Sigmoid colon (tissue), 7 donors: ENCODE measurements at regions of chr1 and their contacts with region 1.

Region 1: GRCh38 chr1:243325305-243325890 is 69.6 kb downstream of the SDCCAG8 start:
- DNase-seq: no peak
- H3K4me3 ChIP-seq: no peak overlapping the region
- H3K27ac ChIP-seq: no peak overlapping the region
- H3K4me1 ChIP-seq: no peaks in the 10 kb centered on the region
- H3K27me3 ChIP-seq: no peaks in the 10 kb centered on the region
- CTCF ChIP-seq: peak; percentile 31 to 81 (median 64)
- EP300 ChIP-seq: no peak
- POLR2A ChIP-seq: no peak

Region 2: DNA sequence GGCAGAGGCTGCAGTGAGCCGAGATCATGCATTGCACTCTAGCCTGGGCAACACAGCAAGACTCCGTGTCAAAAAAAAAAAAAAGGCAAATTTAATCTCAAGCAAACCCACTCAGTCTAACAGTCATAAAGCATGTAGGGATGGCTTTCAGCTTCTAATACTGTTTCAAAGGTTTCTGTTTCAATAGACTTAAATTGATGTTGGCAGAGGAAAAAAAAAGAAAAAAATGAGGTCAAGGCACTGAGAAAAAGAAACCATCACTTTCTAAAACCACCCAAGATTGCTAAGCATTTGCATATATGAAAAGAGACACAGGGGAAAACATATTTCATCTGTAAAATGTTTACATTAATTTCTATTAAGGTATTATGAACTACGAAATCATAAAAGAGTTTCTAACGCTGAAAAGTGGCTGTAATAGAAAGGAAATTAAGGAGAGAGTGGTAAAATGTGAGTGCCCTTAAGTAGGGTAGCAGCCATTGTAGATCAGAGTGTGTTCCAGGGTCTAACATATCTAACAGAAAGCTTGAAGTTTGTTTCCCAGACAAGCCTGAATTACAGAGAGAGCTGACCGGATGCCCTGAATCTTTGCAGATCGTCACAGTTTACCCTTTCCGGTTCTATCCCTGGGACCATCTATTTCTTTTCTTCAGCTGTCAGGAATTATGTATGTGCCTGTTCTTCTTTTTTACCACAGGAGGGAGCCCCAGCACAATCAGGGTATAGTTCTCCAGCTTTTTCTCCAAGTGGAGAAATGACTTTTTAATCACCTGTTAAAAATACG is 870.9 kb before region 1 on chr1:
- intact Hi-C with region 1: loop called (anchors 5 kb)
- DNase-seq: no peak
- H3K4me3 ChIP-seq: no peak overlapping the region
- H3K27ac ChIP-seq: no peak overlapping the region
- H3K4me1 ChIP-seq: no peaks in the 10 kb centered on the region
- H3K27me3 ChIP-seq: peaks cover 0 to 28% (median 0%) of the 10 kb centered on the region in 3 donors
- CTCF ChIP-seq: peak in 3 of 4 experiments; percentile 31 to 53 (median 37)
- EP300 ChIP-seq: no peak
- POLR2A ChIP-seq: no peak

Region 3: DNA sequence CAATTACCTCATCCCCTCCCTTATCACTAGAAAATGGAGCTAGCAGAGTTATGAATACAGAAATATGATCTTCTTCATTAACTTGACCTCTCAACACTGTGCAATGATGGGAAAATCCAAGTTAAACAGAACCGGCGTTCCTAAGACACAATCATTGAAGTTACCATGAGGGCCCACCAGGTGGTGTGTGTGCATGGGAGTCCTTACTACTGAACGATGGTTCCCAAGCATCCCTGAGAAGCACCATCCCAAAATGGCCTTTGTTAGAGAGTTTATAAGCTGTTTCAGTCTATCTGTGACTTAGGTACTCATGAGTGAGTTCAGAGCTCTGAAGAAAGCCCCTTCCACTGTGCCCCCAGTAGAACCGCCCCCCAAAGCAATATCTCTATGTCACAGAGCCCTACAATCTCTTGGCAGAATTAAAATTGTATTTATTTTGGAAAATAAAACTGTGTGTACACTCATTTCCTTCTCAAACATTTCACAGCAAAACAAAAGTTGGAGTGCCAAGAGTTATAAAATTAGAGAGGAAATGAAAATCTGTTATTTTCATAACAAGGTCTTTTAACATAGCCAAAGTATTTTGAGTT is 857.7 kb before region 1 on chr1:
- intact Hi-C with region 1: loop called (anchors 5 kb)
- DNase-seq: no peak
- H3K4me3 ChIP-seq: no peak overlapping the region
- H3K27ac ChIP-seq: no peak overlapping the region
- H3K4me1 ChIP-seq: no peaks in the 10 kb centered on the region
- H3K27me3 ChIP-seq: no peaks in the 10 kb centered on the region
- CTCF ChIP-seq: peak in 3 of 4 experiments; percentile 11 to 59 (median 35)
- EP300 ChIP-seq: no peak
- POLR2A ChIP-seq: no peak